Thyroid gland (tissue), 4 donors: ENCODE measurements at regions of chr20 and their contacts with region 1.

Region 1: GRCh38 chr20:41411391-41411847 is 44.8 kb upstream of the EMILIN3 start:
- DNase-seq: no peak
- H3K4me3 ChIP-seq: no peak overlapping the region
- H3K27ac ChIP-seq: no peak overlapping the region
- H3K4me1 ChIP-seq: no peaks in the 10 kb centered on the region
- H3K27me3 ChIP-seq: no peaks in the 10 kb centered on the region
- CTCF ChIP-seq: peak in 5 of 6 experiments; percentile 11 to 43 (median 28)
- POLR2A ChIP-seq: no peak

Region 2: GRCh38 chr20:41261790-41262717 is 149.4 kb before region 1 on chr20:
- intact Hi-C with region 1: no loop called
- DNase-seq: no peak
- H3K4me3 ChIP-seq: no peak overlapping the region
- H3K27ac ChIP-seq: no peak overlapping the region
- H3K4me1 ChIP-seq: peaks cover 8 to 20% of the 10 kb centered on the region in 2 donors
- H3K27me3 ChIP-seq: no peaks in the 10 kb centered on the region
- CTCF ChIP-seq: no peak
- POLR2A ChIP-seq: no peak

Region 3: DNA sequence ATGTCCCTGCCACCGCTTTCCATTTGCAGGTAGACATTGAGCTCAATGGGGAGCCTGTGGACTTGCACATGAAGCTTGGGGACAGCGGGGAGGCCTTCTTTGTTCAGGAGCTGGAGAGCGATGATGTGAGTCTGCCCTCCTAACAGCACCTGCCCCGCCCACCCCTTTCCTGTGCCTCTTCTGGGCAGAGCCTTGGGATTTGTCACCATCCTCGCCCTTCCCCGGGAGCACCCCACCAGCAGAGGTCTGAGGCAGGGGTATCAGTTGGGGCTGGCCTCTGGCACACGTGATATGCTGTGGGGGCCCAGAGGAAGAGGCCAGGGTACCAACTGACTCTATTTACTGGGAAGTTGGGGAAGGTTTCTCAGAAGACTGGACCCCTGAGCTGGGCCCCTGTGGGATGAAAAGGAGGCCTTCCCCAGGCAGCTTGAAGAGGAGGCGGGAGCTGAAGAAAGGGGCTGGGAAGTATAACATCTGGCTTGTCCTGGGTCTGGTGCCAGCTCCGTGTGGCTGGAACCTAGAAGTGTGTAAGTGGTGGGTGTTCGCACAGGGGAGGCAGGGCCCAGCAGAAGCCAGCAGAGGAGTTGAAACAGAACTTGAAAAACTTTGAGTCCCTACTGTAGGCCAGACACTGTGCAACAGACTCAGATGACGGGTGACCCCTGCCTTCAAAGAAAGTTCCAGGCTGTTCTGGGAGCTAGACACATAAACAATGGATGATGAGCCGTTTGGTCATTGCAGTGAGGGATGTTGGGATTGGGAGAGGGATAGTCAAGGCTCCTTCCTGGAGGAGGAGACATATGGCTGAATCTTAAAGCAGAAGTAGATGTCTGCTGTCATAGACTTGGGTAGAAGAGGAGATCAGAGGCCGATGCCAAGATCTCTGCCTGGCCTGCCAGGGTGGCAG is 63.6 kb before region 1 on chr20:
- intact Hi-C with region 1: loop called (anchors 5 kb)
- DNase-seq: no peak
- H3K4me3 ChIP-seq: no peak overlapping the region
- H3K27ac ChIP-seq: no peak overlapping the region
- H3K4me1 ChIP-seq: peaks cover 7 to 13% of the 10 kb centered on the region in 2 donors
- H3K27me3 ChIP-seq: no peaks in the 10 kb centered on the region
- CTCF ChIP-seq: no peak
- POLR2A ChIP-seq: no peak